ENCODE measurements at regions of chr14 and their contacts with region 1.

Region 1: DNA sequence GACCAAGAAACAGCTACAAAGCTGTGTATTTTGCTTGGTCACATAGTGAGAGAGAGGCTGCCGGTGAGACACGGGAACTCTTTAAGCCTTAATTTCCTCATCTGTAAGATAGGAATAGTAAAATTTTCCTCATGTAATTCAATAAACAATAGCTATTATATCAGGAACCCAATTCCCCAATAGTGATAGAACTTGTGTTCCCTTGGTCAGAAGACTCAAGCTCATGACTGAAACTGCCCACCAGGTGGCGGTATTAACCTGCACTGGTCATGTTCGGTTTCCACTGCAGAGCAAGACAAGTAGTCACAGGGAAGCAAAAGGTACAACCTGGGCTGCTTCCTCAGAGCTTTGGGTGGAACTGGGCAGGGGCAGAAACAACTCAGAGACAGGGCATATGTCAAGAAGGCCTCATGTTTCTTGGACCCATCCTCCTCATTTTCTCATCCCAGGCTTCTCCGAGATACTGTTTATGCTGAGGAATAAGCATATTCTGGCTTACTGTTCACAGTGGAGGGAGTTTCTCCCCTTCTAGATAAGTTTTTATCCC is 4.2 kb upstream of the AJUBA start:
- DNase-seq: no peak
- H3K4me3 ChIP-seq: no peak overlapping the region
- H3K27me3 ChIP-seq: no peaks in the 10 kb centered on the region
- CTCF ChIP-seq: peak; percentile 88

Region 2: GRCh38 chr14:22929104-22929847 is 57.3 kb before region 1 on chr14 and contains the start of gene PRMT5:
- CTCF ChIA-PET with region 1: interaction called, 48 read pairs
- POLR2A ChIA-PET with region 1: no interaction called
- DNase-seq: peak; percentile 100
- H3K4me3 ChIP-seq: peak within 1 kb of the TSS; percentile 86
- H3K27me3 ChIP-seq: no peaks in the 10 kb centered on the region
- CTCF ChIP-seq: no peak
- polyA plus RNA-seq, gene PRMT5: 128 and 152 TPM in 2 replicates

Region 3: DNA sequence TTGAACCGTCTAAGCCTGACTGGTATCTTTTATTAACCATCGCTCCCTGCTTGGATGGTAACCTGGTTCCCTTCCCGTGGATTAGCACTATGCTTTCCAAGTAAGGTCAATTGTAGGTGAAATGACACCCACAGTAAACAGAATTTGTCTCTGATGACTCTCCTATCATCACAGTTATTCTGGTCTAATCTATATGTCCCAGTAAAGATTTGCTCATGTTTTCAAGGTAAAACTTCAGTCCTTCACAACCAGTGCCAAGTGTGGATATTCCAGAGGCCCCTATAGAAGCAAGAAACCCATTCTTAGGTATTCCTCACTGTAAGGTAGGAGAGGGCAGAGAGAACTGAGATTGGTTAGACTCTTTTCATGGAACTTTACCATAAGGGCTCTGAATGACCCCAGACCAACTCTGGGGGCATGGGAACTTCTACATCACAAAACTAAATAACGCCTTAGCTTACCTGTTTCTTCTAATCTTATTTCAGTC is 19.8 kb before region 1 on chr14:
- CTCF ChIA-PET with region 1: interaction called, 93 read pairs
- POLR2A ChIA-PET with region 1: no interaction called
- DNase-seq: no peak
- H3K4me3 ChIP-seq: no peak overlapping the region
- H3K27me3 ChIP-seq: no peaks in the 10 kb centered on the region
- CTCF ChIP-seq: no peak

Region 4: GRCh38 chr14:23000860-23001259 is 14.3 kb after region 1 on chr14:
- CTCF ChIA-PET with region 1: interaction called, 79 read pairs
- POLR2A ChIA-PET with region 1: interaction called, 3 read pairs
- DNase-seq: no peak
- H3K4me3 ChIP-seq: no peak overlapping the region
- H3K27me3 ChIP-seq: no peaks in the 10 kb centered on the region
- CTCF ChIP-seq: no peak

Region 5: DNA sequence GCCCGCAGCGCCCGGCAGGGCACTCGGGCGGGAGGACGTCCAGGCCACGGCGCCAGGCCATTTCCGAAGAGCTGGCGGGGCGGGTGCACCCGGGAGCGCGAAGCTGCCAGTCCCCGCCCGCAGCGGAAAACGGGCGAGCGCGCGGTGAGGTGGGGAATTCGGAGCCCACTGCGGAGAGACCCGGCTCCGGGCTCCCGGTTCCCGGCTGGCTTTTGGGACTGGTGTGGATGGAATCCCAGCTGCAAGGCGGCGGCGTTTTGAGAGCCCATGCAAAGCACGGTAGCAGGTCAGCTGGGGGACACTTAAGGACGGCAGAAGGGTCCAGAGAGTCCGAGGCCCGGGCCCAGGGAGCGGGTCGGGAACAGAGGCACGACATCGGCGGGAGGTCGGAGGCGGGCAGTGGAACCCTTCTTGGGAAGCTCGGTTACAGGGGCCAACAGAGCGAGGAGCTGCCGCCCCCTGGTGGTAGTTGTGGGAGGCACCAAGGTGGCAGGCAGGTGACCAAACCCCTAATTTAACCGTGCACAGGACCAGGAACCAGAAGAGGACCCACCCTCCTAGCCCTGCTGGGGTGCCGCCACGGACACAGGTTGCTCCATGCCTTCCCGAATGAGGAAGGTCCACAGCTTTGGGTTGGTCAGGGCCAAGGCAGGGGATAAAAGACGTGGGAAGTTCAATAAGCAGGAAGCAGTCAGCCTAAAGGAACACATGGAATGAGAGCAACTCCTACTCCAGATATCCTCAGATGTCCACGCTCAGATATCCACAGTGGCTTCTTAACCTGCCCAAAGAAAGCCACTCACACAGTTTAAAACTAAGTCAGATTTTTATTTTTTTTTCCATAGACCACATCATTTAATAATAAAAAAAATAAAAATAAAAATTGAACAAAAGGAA is 71.4 kb after region 1 on chr14:
- CTCF ChIA-PET with region 1: interaction called, 539 read pairs
- POLR2A ChIA-PET with region 1: interaction called, 3 read pairs
- DNase-seq: no peak
- H3K4me3 ChIP-seq: peak overlapping the region; percentile 52
- H3K27me3 ChIP-seq: no peaks in the 10 kb centered on the region
- CTCF ChIP-seq: peak; percentile 92

Region 6: GRCh38 chr14:23076785-23077408 is 90.3 kb after region 1 on chr14:
- CTCF ChIA-PET with region 1: interaction called, 17 read pairs
- POLR2A ChIA-PET with region 1: no interaction called
- DNase-seq: no peak
- H3K4me3 ChIP-seq: no peak overlapping the region
- H3K27me3 ChIP-seq: no peaks in the 10 kb centered on the region
- CTCF ChIP-seq: peak; percentile 70